Tibial artery (tissue), 4 donors: ENCODE measurements at regions of chr4 and their contacts with region 1.

Region 1: GRCh38 chr4:134408897-134409296 is 207.3 kb upstream of the PABPC4L start:
- DNase-seq: no peak
- H3K4me3 ChIP-seq: no peak overlapping the region
- H3K27ac ChIP-seq: no peak overlapping the region
- H3K4me1 ChIP-seq: no peaks in the 10 kb centered on the region
- H3K27me3 ChIP-seq: no peaks in the 10 kb centered on the region
- CTCF ChIP-seq: no peak

Region 2: DNA sequence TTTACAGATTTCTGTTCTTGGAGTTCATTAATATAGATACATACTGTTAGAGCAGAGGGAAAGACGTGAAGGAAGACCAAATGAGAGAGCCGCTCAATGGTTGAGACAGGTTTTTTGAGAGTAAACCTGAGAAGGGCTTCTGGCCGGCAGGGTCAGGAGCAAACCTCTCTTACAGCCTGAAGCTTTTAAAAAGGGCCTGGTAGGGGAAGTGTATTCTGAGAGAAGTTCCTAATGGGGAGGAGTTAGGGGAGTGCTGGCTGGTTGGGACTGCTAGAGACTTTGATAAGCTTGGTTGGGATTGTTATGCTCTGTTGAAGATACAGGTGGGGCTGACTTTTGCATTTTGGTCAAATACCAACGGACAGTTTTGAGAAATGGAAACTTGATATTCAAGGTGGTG is 20.5 kb before region 1 on chr4:
- intact Hi-C with region 1: loop called (anchors 1 kb)
- DNase-seq: no peak
- H3K4me3 ChIP-seq: no peak overlapping the region
- H3K27ac ChIP-seq: no peak overlapping the region
- H3K4me1 ChIP-seq: no peaks in the 10 kb centered on the region
- H3K27me3 ChIP-seq: no peaks in the 10 kb centered on the region
- CTCF ChIP-seq: no peak

Region 3: GRCh38 chr4:134747108-134747805 is 338.4 kb after region 1 on chr4:
- intact Hi-C with region 1: no loop called
- DNase-seq: no peak
- H3K4me3 ChIP-seq: no peak overlapping the region
- H3K27ac ChIP-seq: no peak overlapping the region
- H3K4me1 ChIP-seq: no peaks in the 10 kb centered on the region
- H3K27me3 ChIP-seq: no peaks in the 10 kb centered on the region
- CTCF ChIP-seq: no peak